Activated T-helper 2 cell treated with anti-CD3 and anti-CD28 coated beads, Interferon-gamma antibody, Interleukin-2, Interleukin-4, amounts not matched to agents 10 μg/mL and 5 μg/mL and 100 μg/mL, durations not matched to agents 14 hours and 24 hours and 36 hours (primary cell): ENCODE measurements at regions of chr10 and their contacts with region 1.

Region 1: GRCh38 chr10:43671656-43672531 is 23.2 kb upstream of the ZNF32 start:
- DNase-seq: no peak
- H3K4me3 Mint-ChIP-seq: no peak overlapping the region
- H3K27ac Mint-ChIP-seq: no peak overlapping the region
- H3K4me1 Mint-ChIP-seq: no peaks in the 10 kb centered on the region
- H3K27me3 Mint-ChIP-seq: peaks cover 30% of the 10 kb centered on the region

Region 2: GRCh38 chr10:43627942-43628341 is 44.0 kb before region 1 on chr10:
- intact Hi-C with region 1: no loop called
- DNase-seq: no peak
- H3K4me3 Mint-ChIP-seq: no peak overlapping the region
- H3K27ac Mint-ChIP-seq: no peak overlapping the region
- H3K4me1 Mint-ChIP-seq: peaks cover 6% of the 10 kb centered on the region
- H3K27me3 Mint-ChIP-seq: no peaks in the 10 kb centered on the region

Region 3: GRCh38 chr10:43793704-43794103 is 121.8 kb after region 1 on chr10:
- intact Hi-C with region 1: no loop called
- DNase-seq: no peak
- H3K4me3 Mint-ChIP-seq: no peak overlapping the region
- H3K27ac Mint-ChIP-seq: no peak overlapping the region
- H3K4me1 Mint-ChIP-seq: no peaks in the 10 kb centered on the region
- H3K27me3 Mint-ChIP-seq: peaks cover 34% of the 10 kb centered on the region

Region 4: GRCh38 chr10:44030143-44030542 is 358.2 kb after region 1 on chr10:
- intact Hi-C with region 1: loop called (anchors 5 kb)
- DNase-seq: no peak
- H3K4me3 Mint-ChIP-seq: no peak overlapping the region
- H3K27ac Mint-ChIP-seq: no peak overlapping the region
- H3K4me1 Mint-ChIP-seq: no peaks in the 10 kb centered on the region
- H3K27me3 Mint-ChIP-seq: peaks cover 10% of the 10 kb centered on the region

Region 5: DNA sequence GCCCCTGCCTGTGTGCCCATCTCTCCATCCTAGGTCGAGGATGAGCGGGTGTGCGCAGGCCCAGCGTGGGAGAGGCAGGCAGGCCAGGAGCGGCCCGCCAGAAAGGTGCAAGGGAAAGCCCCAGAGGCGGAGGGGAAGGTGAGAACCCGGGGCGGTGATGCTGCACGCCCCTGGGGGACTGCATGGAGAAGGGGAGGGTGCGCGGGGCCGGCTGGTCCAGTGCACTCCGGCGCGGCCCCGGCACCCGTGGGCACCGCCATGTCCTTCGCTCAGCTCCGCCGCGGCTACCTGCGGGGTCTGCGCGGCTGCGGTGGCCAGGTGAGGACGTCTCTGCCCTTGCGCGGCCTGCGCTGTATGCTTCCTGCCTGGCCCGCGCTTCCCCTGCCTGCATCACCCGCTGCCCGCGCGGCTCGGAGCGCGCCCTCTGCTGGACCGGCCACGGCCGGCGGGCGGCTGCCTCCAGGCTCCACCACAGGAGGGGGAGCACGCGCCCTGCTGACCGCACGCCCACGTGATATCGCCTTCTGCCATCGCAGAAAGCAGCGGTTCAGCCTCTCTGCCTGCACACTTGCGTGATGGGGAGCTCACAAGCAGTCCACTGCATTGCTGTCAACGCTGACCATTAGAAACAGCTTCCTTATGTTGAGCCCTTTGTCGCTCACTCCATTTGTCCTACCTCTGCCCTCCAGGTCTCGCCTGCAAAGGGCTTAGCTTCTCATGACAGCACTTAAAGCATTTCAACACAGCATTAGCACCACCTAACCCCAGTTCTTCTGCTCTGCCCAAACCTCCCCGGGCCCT is 639.1 kb after region 1 on chr10:
- intact Hi-C with region 1: loop called (anchors 1 kb)
- DNase-seq: peak; percentile 62
- H3K4me3 Mint-ChIP-seq: no peak overlapping the region
- H3K27ac Mint-ChIP-seq: no peak overlapping the region
- H3K4me1 Mint-ChIP-seq: peaks cover 7% of the 10 kb centered on the region
- H3K27me3 Mint-ChIP-seq: peaks cover 12% of the 10 kb centered on the region

Region 6: GRCh38 chr10:44386546-44387052 is 714.7 kb after region 1 on chr10:
- intact Hi-C with region 1: loop called (anchors 2 kb)
- DNase-seq: no peak
- H3K4me3 Mint-ChIP-seq: no peak overlapping the region
- H3K27ac Mint-ChIP-seq: no peak overlapping the region
- H3K4me1 Mint-ChIP-seq: no peaks in the 10 kb centered on the region
- H3K27me3 Mint-ChIP-seq: peaks cover 30% of the 10 kb centered on the region

Region 7: DNA sequence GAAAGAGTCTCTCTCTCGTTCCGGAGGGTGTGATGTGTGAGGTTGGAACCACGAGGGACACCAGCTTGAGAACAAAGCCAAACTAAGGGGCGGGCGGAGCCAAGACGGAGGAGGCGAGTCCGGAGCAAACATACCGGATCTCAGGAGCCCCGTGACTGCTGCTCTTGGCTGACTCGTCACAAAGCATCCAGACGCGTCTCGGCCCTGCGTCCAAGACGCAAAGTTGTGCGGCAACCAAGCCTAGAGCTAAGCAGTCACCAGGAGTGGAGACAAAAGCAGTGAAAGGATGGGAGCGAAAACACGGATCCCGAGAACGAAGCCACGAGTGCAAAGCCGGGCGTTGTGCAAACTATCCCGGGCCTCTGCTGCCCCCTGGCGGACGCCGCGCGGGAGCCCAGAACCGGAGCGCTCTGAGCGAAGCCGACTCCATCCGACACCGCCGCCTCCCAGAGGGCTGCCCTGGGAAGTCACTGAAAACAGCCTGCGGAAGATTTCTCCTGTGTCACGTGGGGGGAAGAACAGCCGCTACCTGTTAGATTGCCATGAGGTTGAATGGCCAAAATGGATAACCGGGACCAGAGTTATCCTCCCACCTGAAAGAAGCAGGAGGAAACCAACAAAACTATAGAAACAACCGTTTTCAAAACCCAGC is 1192.9 kb after region 1 on chr10:
- intact Hi-C with region 1: loop called (anchors 10 kb)
- DNase-seq: peak; percentile 72
- H3K4me3 Mint-ChIP-seq: peak overlapping the region; percentile 88
- H3K27ac Mint-ChIP-seq: no peak overlapping the region
- H3K4me1 Mint-ChIP-seq: peaks cover 12% of the 10 kb centered on the region
- H3K27me3 Mint-ChIP-seq: peaks cover 53% of the 10 kb centered on the region